H1 (cell line): ENCODE measurements at regions of chr1 and their contacts with region 1.

Region 1: GRCh38 chr1:205321164-205321958 is at the start of gene NUAK2:
- DNase-seq: peak; percentile 82 to 96
- H3K4me3 ChIP-seq: peak within 1 kb of the TSS; percentile 67 to 93 (median 80)
- H3K27ac ChIP-seq: peak within 1 kb of the TSS; percentile 81
- H3K4me1 ChIP-seq: peaks cover 26 to 37% (median 31%) of the 10 kb centered on the region in 4 experiments
- H3K27me3 ChIP-seq: no peaks in the 10 kb centered on the region
- CTCF ChIP-seq: no peak
- EP300 ChIP-seq: no peak
- POLR2A ChIP-seq: peak; percentile 63 to 92
- RAD21 ChIP-seq: no peak
- total RNA-seq, gene NUAK2: 12.7 and 12.9 TPM in 2 replicates

Region 2: GRCh38 chr1:205162301-205162700 is 159.1 kb before region 1 on chr1:
- CTCF ChIA-PET with region 1: no interaction called
- POLR2A ChIA-PET with region 1: no interaction called
- DNase-seq: no peak
- H3K4me3 ChIP-seq: no peak overlapping the region
- H3K27ac ChIP-seq: no peak overlapping the region
- H3K4me1 ChIP-seq: no peaks in the 10 kb centered on the region
- H3K27me3 ChIP-seq: no peaks in the 10 kb centered on the region
- CTCF ChIP-seq: no peak
- EP300 ChIP-seq: no peak
- POLR2A ChIP-seq: no peak
- RAD21 ChIP-seq: no peak

Region 3: GRCh38 chr1:205227584-205228006 is 93.8 kb before region 1 on chr1 and contains the start of gene TMCC2:
- CTCF ChIA-PET with region 1: interaction called, 19 read pairs
- POLR2A ChIA-PET with region 1: interaction called, 5 read pairs
- DNase-seq: peak; percentile 73 to 97
- H3K4me3 ChIP-seq: peak within 1 kb of the TSS; percentile 59 to 85 (median 73)
- H3K27ac ChIP-seq: no peak within 1 kb of the TSS
- H3K4me1 ChIP-seq: peaks cover 13 to 18% (median 16%) of the 10 kb centered on the region in 4 experiments; a peak in 6 of 7 replicates
- H3K27me3 ChIP-seq: peaks cover 0 to 6% (median 4%) of the 10 kb centered on the region in 4 experiments; a peak in 5 of 7 replicates
- CTCF ChIP-seq: no peak
- EP300 ChIP-seq: no peak
- POLR2A ChIP-seq: peak in 1 of 2 experiments; percentile 45; a peak in 1 of 3 replicates
- RAD21 ChIP-seq: no peak
- total RNA-seq, gene TMCC2: 6.7 and 7.2 TPM in 2 replicates

Region 4: GRCh38 chr1:205273551-205273982 is 47.8 kb before region 1 on chr1:
- CTCF ChIA-PET with region 1: interaction called, 2,424 read pairs
- POLR2A ChIA-PET with region 1: interaction called, 85 read pairs
- DNase-seq: peak; percentile 83 to 94
- H3K4me3 ChIP-seq: no peak overlapping the region
- H3K27ac ChIP-seq: 0 out of 2 replicates have a peak overlapping the region, but pooled peaks have one; percentile 0
- H3K4me1 ChIP-seq: peaks cover 5 to 19% (median 11%) of the 10 kb centered on the region in 4 experiments; a peak in 6 of 7 replicates
- H3K27me3 ChIP-seq: no peaks in the 10 kb centered on the region
- CTCF ChIP-seq: peak in 2 of 3 experiments; percentile 96 to 100; a peak in 3 of 4 replicates
- EP300 ChIP-seq: no peak
- POLR2A ChIP-seq: no peak
- RAD21 ChIP-seq: peak; percentile 99 to 100

Region 5: GRCh38 chr1:205284343-205285144 is 36.8 kb before region 1 on chr1:
- CTCF ChIA-PET with region 1: interaction called, 2,424 read pairs
- POLR2A ChIA-PET with region 1: interaction called, 14 read pairs
- DNase-seq: peak; percentile 73 to 87
- H3K4me3 ChIP-seq: no peak overlapping the region
- H3K27ac ChIP-seq: peak overlapping the region; percentile 56; the same call in 1 of the 2 replicates
- H3K4me1 ChIP-seq: peaks cover 9 to 26% (median 18%) of the 10 kb centered on the region in 4 experiments
- H3K27me3 ChIP-seq: no peaks in the 10 kb centered on the region; a peak in 1 of 7 replicates
- CTCF ChIP-seq: no peak
- EP300 ChIP-seq: no peak
- POLR2A ChIP-seq: peak in 1 of 2 experiments; percentile 62; a peak in 2 of 3 replicates
- RAD21 ChIP-seq: no peak; a peak in 2 of 4 replicates

Region 6: DNA sequence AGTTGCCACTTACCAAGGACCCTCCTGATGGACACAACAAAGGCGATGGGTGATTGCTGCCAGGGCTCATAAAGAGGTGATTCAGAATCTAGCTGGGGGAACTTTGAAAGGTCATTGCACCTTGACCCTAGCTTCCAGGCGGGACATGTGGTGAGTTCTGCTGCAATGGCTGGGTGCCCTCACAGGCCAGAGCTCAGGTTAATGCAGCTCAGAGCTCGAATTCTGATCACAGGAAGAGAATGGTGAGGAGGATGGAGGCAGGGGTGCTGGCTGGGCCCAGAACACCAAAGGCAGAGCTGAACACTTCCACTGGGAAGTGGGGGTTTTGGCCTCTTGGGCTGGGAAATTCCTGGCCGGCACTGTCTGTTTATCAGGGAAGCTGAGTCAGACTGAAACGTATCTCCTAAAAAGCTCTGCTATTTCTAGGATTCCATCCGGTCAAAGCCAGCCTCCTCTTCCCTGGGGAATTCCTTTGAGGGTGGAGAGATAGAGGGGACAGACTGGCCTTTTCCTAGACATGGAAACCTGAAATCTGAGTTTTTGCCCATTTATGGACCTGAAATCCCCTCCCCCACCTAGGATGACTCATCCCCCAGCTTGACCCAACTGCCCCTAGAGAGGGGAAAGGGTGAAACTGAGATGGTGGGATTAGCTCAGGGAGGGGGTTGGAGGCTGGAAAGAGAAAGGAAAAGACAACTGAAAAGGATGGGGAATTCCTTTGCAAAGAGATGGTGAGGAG is 27.0 kb before region 1 on chr1:
- CTCF ChIA-PET with region 1: interaction called, 2,424 read pairs
- POLR2A ChIA-PET with region 1: interaction called, 38 read pairs
- DNase-seq: peak; percentile 56 to 85
- H3K4me3 ChIP-seq: peak overlapping the region in 1 of 4 experiments; percentile 30; a peak in 2 of 8 replicates
- H3K27ac ChIP-seq: peak overlapping the region; percentile 97
- H3K4me1 ChIP-seq: peaks cover 24 to 35% (median 28%) of the 10 kb centered on the region in 4 experiments
- H3K27me3 ChIP-seq: no peaks in the 10 kb centered on the region; a peak in 1 of 7 replicates
- CTCF ChIP-seq: no peak
- EP300 ChIP-seq: peak in 1 of 2 experiments; percentile 97; a peak in 2 of 3 replicates
- POLR2A ChIP-seq: peak in 1 of 2 experiments; percentile 66; a peak in 1 of 3 replicates
- RAD21 ChIP-seq: no peak

Region 7: GRCh38 chr1:205300886-205301821 is 20.2 kb before region 1 on chr1:
- CTCF ChIA-PET with region 1: interaction called, 313 read pairs
- POLR2A ChIA-PET with region 1: interaction called, 134 read pairs
- DNase-seq: peak; percentile 94 to 99
- H3K4me3 ChIP-seq: peak overlapping the region in 3 of 4 experiments; percentile 27 to 43 (median 34); a peak in 3 of 8 replicates
- H3K27ac ChIP-seq: peak overlapping the region; percentile 98
- H3K4me1 ChIP-seq: peaks cover 21 to 38% (median 31%) of the 10 kb centered on the region in 4 experiments
- H3K27me3 ChIP-seq: no peaks in the 10 kb centered on the region; a peak in 1 of 7 replicates
- CTCF ChIP-seq: no peak
- EP300 ChIP-seq: peak; percentile 14 to 99
- POLR2A ChIP-seq: peak; percentile 61 to 91
- RAD21 ChIP-seq: peak; percentile 23 to 28; a peak in 2 of 4 replicates

Region 8: DNA sequence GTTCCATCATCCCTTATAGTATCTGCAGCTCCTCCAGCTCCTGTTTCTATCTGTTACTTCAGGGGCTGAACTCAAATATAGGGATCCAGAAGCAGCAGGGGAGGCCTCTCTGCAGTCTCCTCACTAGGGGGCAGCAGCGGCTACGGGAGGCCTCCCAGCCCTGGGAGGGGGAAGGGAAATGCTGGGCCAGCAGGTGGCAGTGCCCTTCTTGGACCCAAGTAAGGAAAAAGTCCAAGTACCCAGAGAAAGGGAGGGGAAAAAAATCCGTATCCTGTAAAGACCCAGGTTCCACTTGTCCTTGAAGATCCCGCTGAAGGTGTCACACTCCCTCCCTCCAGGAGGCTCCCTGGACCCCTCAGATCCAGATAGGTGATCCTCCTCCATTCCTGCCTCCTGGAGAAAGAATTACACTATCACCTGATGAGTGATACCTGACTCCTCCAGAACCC is 14.3 kb after region 1 on chr1:
- CTCF ChIA-PET with region 1: interaction called, 62 read pairs
- POLR2A ChIA-PET with region 1: interaction called, 9 read pairs
- DNase-seq: peak; percentile 78 to 91
- H3K4me3 ChIP-seq: no peak overlapping the region
- H3K27ac ChIP-seq: no peak overlapping the region
- H3K4me1 ChIP-seq: peaks cover 0 to 3% (median under 1%) of the 10 kb centered on the region in 4 experiments; a peak in 4 of 7 replicates
- H3K27me3 ChIP-seq: no peaks in the 10 kb centered on the region; a peak in 3 of 7 replicates
- CTCF ChIP-seq: peak; percentile 93 to 99 (median 94)
- EP300 ChIP-seq: no peak
- POLR2A ChIP-seq: no peak
- RAD21 ChIP-seq: peak; percentile 78 to 89